MCF 10A (cell line): ENCODE measurements at regions of chr3 and their contacts with region 1.

Region 1: DNA sequence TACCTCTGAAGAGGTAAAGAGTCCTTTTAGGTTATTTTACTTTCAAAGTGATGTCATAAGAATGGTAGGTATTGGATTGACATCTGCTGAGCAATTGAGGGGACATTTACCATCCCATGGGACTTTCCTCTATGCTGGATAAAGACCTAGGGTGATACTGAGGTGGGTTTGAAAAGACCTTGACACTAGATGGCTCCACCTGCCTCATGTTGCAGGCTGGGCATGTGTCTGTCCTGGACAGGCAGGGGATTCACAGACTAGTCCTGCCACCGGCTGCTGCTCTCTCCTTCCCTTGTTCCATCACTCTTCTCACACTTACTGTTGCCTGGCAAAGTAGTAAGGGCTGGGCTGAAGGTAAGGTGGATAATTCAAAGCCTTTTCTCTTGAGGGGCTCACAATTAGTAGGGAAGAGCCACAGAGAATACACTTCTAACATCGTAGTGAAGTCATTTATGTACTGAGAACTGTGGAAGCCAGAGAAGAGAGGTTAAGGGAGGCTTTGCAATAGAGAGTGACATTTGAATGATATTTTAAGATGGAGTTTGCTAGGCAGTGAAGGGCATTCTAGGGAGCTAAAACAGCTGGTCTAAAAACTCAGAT is 27.7 kb downstream of the TRAK1 start:
- DNase-seq: peak; percentile 72
- H3K4me3 Mint-ChIP-seq: no peak overlapping the region
- H3K27ac Mint-ChIP-seq: peak overlapping the region; percentile 72
- H3K4me1 Mint-ChIP-seq: peaks cover 49% of the 10 kb centered on the region
- H3K27me3 Mint-ChIP-seq: no peaks in the 10 kb centered on the region
- CTCF ChIP-seq: peak; percentile 36

Region 2: DNA sequence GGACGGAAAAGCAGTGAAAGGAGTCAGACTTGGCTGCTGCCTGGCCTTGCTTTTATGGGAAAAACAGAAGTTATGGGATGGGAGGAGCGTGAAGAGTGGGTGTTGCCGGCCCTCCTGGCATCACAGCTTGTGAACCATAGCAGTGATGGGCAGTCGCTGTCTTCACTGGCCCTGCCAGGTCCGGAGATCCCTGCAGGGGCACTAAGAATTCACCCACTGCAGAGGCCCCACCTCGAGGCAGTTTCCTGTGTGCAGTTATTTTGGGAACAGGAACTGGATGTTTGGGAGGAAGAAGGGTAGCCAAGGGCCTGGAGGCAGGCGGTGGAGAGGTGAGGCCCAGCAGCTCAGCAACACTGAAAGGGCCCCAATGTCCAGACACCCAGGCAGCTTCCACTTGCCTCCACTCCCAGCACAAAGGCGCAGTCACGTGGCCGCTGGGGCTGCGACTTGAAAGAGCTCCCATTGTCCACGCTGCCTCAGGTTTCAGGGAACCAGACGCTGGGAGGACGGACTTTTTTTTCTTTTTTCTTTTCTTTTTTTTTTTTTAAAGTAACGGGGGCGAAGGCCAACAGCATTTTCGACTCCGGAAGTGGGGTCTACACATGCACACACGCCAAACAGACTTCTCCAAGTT is 1338.5 kb before region 1 on chr3:
- CTCF ChIA-PET with region 1: no interaction called
- POLR2A ChIA-PET with region 1: no interaction called
- intact Hi-C with region 1: loop called (anchors 10 kb)
- DNase-seq: no peak
- H3K4me3 Mint-ChIP-seq: peak overlapping the region; percentile 12
- H3K27ac Mint-ChIP-seq: no peak overlapping the region
- H3K4me1 Mint-ChIP-seq: no peaks in the 10 kb centered on the region
- H3K27me3 Mint-ChIP-seq: no peaks in the 10 kb centered on the region
- CTCF ChIP-seq: no peak

Region 3: DNA sequence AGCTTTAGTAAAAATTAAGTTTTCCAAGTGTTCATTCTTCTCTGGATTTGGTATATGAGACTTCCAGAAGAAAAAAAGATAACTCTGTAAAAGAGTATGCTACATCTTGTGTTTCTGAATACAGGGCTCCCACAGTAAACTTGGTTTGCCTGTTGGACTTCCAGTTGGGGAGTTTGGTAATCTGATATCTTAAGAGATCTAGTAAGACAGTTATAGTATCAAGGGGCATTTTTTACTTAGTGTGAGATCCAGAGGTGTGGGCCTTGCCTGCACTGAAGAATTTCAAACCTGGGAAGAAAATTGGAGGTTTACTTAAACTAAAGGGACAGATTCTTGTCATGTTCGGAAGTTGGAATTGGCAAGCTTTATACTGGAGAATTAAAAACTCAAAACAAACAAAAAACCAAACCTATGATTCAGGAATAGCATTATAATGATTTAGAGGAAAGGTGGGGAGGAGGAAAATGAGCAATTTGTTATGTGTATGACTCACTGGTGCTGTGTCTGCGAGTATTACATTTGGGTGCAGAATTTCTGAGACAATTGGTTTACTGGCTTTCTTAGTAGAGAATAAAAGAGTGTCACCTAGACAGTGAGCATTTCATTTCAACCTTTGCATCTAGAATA is 98.1 kb before region 1 on chr3:
- CTCF ChIA-PET with region 1: no interaction called
- POLR2A ChIA-PET with region 1: no interaction called
- intact Hi-C with region 1: no loop called
- DNase-seq: peak; percentile 80
- H3K4me3 Mint-ChIP-seq: peak overlapping the region; percentile 24
- H3K27ac Mint-ChIP-seq: peak overlapping the region; percentile 95
- H3K4me1 Mint-ChIP-seq: peaks cover 51% of the 10 kb centered on the region
- H3K27me3 Mint-ChIP-seq: no peaks in the 10 kb centered on the region
- CTCF ChIP-seq: no peak

Region 4: GRCh38 chr3:42129014-42129953 is 10.4 kb after region 1 on chr3:
- CTCF ChIA-PET with region 1: interaction called, 14 read pairs
- POLR2A ChIA-PET with region 1: interaction called, 3 read pairs
- intact Hi-C with region 1: no loop called
- DNase-seq: peak; percentile 54
- H3K4me3 Mint-ChIP-seq: no peak overlapping the region
- H3K27ac Mint-ChIP-seq: peak overlapping the region; percentile 81
- H3K4me1 Mint-ChIP-seq: peaks cover 8% of the 10 kb centered on the region
- H3K27me3 Mint-ChIP-seq: no peaks in the 10 kb centered on the region
- CTCF ChIP-seq: no peak

Region 5: DNA sequence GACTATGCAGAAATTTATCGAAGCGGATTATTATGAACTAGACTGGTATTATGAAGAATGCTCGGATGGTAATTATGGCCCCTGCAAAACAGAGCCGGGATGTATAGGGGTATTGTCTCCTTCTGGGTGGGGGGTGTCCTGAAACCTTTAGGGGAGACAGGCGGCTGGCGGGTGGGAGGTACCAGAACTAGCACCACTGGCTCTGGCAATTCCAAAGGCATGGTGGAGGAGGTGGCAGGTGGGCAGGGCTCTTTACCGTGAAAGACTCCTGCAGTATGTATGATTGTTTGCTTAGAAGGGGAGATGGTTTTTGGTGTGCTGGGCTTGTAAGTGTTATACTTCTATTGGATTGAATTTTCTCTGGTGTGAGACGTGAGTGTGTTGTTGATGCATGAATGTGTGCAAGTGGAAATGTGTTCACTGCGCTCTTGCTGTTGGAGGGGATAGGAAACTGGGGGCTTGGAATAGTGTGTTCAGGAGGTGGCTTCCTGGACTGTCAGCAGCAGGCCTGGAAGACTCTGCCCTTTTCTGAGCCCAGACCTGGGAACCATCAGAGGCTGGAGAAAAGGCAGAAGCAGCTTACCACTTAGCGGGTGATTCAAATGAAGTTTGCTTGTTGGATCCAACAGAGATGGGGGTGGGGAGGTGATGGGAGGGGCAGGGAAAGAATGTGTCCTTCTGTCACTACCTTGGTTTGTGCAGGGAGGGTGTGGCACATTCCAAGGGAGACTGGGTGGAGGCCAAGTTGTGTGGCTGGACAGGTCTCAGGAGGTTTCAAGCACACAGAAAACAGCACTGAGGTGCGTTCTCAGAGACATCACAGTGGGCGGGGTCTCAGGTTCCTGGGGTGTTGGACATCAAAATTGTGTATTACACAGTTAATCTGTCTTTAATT is 30.9 kb after region 1 on chr3:
- CTCF ChIA-PET with region 1: interaction called, 11 read pairs
- POLR2A ChIA-PET with region 1: interaction called, 5 read pairs
- intact Hi-C with region 1: no loop called
- DNase-seq: peak; percentile 44
- H3K4me3 Mint-ChIP-seq: peak overlapping the region; percentile 32
- H3K27ac Mint-ChIP-seq: peak overlapping the region; percentile 47
- H3K4me1 Mint-ChIP-seq: peaks cover 25% of the 10 kb centered on the region
- H3K27me3 Mint-ChIP-seq: no peaks in the 10 kb centered on the region
- CTCF ChIP-seq: no peak

Region 6: GRCh38 chr3:42205800-42206514 is 87.1 kb after region 1 on chr3:
- CTCF ChIA-PET with region 1: interaction called, 11 read pairs
- POLR2A ChIA-PET with region 1: interaction called, 3 read pairs
- intact Hi-C with region 1: no loop called
- DNase-seq: no peak
- H3K4me3 Mint-ChIP-seq: no peak overlapping the region
- H3K27ac Mint-ChIP-seq: no peak overlapping the region
- H3K4me1 Mint-ChIP-seq: no peaks in the 10 kb centered on the region
- H3K27me3 Mint-ChIP-seq: no peaks in the 10 kb centered on the region
- CTCF ChIP-seq: no peak

Region 7: GRCh38 chr3:42430781-42431532 is 312.1 kb after region 1 on chr3:
- CTCF ChIA-PET with region 1: no interaction called
- POLR2A ChIA-PET with region 1: no interaction called
- intact Hi-C with region 1: no loop called
- DNase-seq: no peak
- H3K4me3 Mint-ChIP-seq: no peak overlapping the region
- H3K27ac Mint-ChIP-seq: no peak overlapping the region
- H3K4me1 Mint-ChIP-seq: no peaks in the 10 kb centered on the region
- H3K27me3 Mint-ChIP-seq: peaks cover 17% of the 10 kb centered on the region
- CTCF ChIP-seq: no peak

Region 8: GRCh38 chr3:42443819-42444436 is 325.1 kb after region 1 on chr3:
- CTCF ChIA-PET with region 1: interaction called, 6 read pairs
- POLR2A ChIA-PET with region 1: no interaction called
- intact Hi-C with region 1: loop called (anchors 5 kb)
- DNase-seq: peak; percentile 83
- H3K4me3 Mint-ChIP-seq: no peak overlapping the region
- H3K27ac Mint-ChIP-seq: no peak overlapping the region
- H3K4me1 Mint-ChIP-seq: no peaks in the 10 kb centered on the region
- H3K27me3 Mint-ChIP-seq: peaks cover 11% of the 10 kb centered on the region
- CTCF ChIP-seq: peak; percentile 97